Activated CD4-positive, alpha-beta T cell treated with anti-CD3 and anti-CD28 coated beads for 36 hours (primary cell): ENCODE measurements at regions of chr1 and their contacts with region 1.

Region 1: DNA sequence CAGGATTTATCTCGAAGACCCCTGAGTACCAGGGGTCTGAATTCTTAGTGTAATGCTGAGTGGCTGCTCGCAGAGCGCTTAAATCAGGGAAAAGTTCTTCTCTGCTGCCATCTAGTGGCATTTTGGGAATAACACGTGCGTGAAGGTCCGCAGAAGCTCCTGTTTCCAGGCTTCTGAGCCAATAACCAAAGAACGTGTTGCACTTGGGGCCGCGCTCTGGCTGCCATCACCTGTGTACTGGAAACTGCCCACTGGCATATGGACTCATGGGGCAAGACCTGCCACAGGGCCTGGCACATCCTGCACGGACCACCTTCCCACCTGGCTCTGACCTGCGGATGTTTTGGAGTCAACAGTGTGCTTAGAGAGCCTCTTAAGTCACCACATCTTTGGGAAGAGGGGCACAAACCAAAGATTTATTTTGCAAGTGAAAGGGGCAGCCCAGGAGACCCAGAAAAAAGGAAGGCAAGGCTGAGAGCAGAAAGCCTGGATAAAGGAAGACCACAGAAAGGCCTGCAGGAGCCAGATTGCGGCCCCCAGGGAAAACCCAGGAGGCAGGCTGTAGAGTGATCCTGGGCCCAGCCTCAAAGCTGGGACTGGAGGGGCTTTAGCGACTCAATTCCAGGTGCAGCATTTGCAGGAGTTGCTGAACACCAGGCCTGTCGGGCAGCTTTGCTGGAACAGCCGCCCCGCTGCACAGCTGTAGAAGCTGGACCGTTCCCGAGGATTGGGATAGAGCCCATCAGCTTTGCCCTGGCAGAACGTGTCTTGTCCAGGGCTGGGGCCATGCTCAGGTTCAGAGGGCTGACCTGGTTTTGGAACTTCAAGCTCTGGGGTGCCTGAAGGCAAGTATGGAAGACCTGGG is 13.0 kb downstream of the CHIT1 start:
- DNase-seq: peak; percentile 71
- ATAC-seq: peak; percentile 80
- H3K4me3 Mint-ChIP-seq: no peak overlapping the region
- H3K27ac Mint-ChIP-seq: no peak overlapping the region
- H3K4me1 Mint-ChIP-seq: no peaks in the 10 kb centered on the region
- H3K27me3 Mint-ChIP-seq: peaks cover 7% of the 10 kb centered on the region

Region 2: GRCh38 chr1:202802998-202803932 is 413.2 kb before region 1 on chr1:
- CTCF ChIA-PET with region 1: interaction called, 3 read pairs
- POLR2A ChIA-PET with region 1: interaction called, 11 read pairs
- intact Hi-C with region 1: no loop called
- DNase-seq: no peak
- ATAC-seq: no peak
- H3K4me3 Mint-ChIP-seq: no peak overlapping the region
- H3K27ac Mint-ChIP-seq: peak overlapping the region; percentile 9
- H3K4me1 Mint-ChIP-seq: peaks cover 61% of the 10 kb centered on the region
- H3K27me3 Mint-ChIP-seq: no peaks in the 10 kb centered on the region

Region 3: DNA sequence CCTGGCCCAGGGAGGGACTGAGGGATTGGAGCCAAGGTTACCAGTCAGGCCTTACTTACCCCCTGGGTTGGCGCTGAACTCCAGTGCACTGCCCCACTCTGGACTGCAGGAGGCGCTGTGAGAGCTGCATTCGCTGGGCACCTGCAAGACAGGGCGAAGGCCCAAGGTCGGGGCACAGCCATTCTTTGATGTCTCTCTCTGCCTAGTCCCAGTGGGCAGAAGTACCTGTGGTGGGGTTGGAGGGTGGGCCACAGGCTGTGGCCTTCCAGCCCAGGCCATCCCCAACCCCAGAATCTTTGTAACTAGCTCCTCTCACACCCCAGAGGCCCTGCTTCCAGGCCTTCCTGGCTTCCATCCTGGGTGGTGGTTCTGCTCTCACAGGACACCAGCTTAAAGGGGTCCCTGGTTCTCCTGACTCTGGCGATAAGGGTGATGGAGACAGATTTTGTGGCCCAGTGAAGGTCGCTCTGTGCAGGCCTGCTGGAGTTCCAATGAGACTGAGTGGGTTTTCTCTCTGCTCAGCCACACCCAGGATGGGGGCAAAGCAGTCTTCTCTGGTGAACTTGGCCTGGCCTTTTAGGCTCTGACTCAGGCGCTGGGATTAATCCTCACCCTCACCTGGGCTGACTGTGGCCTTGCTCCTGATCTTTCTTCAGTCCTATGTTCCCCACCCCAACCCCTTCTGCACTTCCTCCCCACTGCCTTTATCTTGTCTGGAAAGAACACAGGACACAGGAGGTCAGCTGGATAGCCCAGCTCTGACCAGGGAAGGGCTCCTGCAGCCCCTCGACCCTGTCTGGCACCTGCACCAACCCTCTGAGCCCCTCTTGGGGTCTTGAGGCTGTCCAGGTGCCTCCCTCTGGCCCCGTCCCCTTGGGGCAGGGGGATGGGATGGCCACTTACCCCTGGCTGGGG is 131.7 kb before region 1 on chr1:
- CTCF ChIA-PET with region 1: interaction called, 18 read pairs
- POLR2A ChIA-PET with region 1: no interaction called
- intact Hi-C with region 1: loop called in 1 of 2 experiments (anchors 1 kb)
- DNase-seq: peak; percentile 71
- ATAC-seq: peak; percentile 68
- H3K4me3 Mint-ChIP-seq: no peak overlapping the region
- H3K27ac Mint-ChIP-seq: no peak overlapping the region
- H3K4me1 Mint-ChIP-seq: no peaks in the 10 kb centered on the region
- H3K27me3 Mint-ChIP-seq: peaks cover 2% of the 10 kb centered on the region

Region 4: GRCh38 chr1:203166566-203166940 is 50.0 kb before region 1 on chr1:
- CTCF ChIA-PET with region 1: interaction called, 19 read pairs
- POLR2A ChIA-PET with region 1: no interaction called
- intact Hi-C with region 1: no loop called
- DNase-seq: peak; percentile 38
- ATAC-seq: peak; percentile 69
- H3K4me3 Mint-ChIP-seq: no peak overlapping the region
- H3K27ac Mint-ChIP-seq: no peak overlapping the region
- H3K4me1 Mint-ChIP-seq: no peaks in the 10 kb centered on the region
- H3K27me3 Mint-ChIP-seq: peaks cover 3% of the 10 kb centered on the region

Region 5: GRCh38 chr1:203199816-203200571 is 16.5 kb before region 1 on chr1:
- CTCF ChIA-PET with region 1: interaction called, 22 read pairs
- POLR2A ChIA-PET with region 1: no interaction called
- intact Hi-C with region 1: no loop called
- DNase-seq: no peak
- ATAC-seq: no peak
- H3K4me3 Mint-ChIP-seq: no peak overlapping the region
- H3K27ac Mint-ChIP-seq: no peak overlapping the region
- H3K4me1 Mint-ChIP-seq: no peaks in the 10 kb centered on the region
- H3K27me3 Mint-ChIP-seq: peaks cover 10% of the 10 kb centered on the region

Region 6: GRCh38 chr1:203326830-203327683 is 110.6 kb after region 1 on chr1:
- CTCF ChIA-PET with region 1: no interaction called
- POLR2A ChIA-PET with region 1: no interaction called
- intact Hi-C with region 1: no loop called
- DNase-seq: peak; percentile 97
- ATAC-seq: peak; percentile 84
- H3K4me3 Mint-ChIP-seq: peak overlapping the region; percentile 72
- H3K27ac Mint-ChIP-seq: peak overlapping the region; percentile 96
- H3K4me1 Mint-ChIP-seq: peaks cover 66% of the 10 kb centered on the region
- H3K27me3 Mint-ChIP-seq: no peaks in the 10 kb centered on the region

Region 7: DNA sequence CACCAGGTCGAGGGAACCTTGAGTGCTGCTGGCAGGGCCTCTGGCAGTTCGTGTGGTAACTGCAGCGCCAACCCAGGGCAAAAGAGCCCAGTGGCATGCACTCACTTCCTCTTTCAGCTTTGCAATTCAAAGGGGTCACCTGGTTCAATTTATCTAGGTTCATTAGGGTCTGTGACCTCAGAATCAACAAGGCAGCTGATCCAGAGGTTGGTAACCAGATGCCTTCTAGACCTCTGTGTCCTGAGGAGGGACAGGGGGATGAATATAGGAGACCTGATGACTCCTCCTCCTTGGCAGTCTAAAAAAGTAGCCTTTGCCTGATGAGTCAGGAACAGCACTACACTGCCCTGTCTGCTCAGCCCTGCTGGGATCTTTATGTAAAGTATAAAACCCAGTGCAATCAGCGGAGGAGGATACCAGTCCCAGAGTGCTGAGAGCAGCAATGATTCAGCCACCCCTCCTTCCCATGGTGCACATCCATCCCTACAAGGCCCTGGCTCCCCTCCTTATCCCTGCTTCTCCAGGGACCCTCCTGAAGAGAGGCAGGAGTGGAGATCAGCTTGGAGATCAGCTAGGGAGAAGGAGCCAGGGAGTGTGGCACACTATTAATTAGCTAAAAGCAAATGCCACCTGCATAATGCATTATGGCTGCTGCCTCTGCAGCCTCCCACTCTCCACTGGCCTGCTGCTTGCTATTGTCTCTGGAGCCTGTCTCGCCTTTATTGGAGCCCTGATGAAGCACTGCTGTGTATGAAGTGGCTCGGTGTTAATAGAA is 145.6 kb after region 1 on chr1:
- CTCF ChIA-PET with region 1: no interaction called
- POLR2A ChIA-PET with region 1: no interaction called
- intact Hi-C with region 1: no loop called
- DNase-seq: no peak
- ATAC-seq: no peak
- H3K4me3 Mint-ChIP-seq: no peak overlapping the region
- H3K27ac Mint-ChIP-seq: no peak overlapping the region
- H3K4me1 Mint-ChIP-seq: no peaks in the 10 kb centered on the region
- H3K27me3 Mint-ChIP-seq: peaks cover 10% of the 10 kb centered on the region